ENCODE measurements at regions of chr12 and their contacts with region 1.

Region 1: GRCh38 chr12:120686690-120687577 is at the start of gene MLEC:
- DNase-seq: peak; percentile 100
- H3K4me3 Mint-ChIP-seq: peak within 1 kb of the TSS; percentile 88
- H3K27ac Mint-ChIP-seq: peak within 1 kb of the TSS; percentile 86
- H3K4me1 Mint-ChIP-seq: peaks cover 48% of the 10 kb centered on the region
- H3K27me3 Mint-ChIP-seq: no peaks in the 10 kb centered on the region
- total RNA-seq, gene MLEC: 139 and 150 TPM in 2 replicates

Region 2: DNA sequence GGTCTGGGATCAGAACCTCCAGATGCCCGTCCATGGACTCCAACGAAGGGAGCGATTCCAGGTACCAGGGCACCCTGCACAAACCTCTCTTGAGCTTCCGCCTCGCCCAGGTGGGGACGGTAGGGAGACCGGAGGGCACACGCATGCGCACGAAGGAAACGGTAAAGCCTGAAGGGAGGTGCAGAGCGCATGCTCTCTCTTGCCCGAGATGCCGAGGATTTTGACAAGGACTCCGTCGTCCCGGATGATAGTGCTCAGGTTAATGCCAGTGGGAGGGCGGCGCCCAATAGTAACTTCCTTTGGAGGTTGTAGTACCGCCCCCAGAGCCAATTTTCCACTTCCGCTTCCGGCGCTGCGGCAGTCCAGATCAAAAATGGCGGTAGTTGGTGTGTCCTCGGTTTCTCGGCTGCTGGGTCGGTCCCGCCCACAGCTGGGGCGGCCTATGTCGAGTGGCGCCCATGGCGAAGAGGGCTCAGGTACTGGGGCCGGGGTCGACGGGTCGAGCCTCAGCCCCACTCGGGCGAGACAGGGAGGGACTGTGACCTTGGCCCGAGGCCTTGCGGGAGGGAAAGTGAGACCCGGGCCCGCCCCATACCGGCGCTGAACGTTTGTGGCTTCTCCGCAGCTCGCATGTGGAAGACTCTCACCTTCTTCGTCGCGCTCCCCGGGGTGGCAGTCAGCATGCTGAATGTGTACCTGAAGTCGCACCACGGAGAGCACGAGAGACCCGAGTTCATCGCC is 249.0 kb before region 1 on chr12 and contains the start of gene COX6A1:
- intact Hi-C with region 1: loop called (anchors 2 kb)
- DNase-seq: peak; percentile 97
- H3K4me3 Mint-ChIP-seq: peak within 1 kb of the TSS; percentile 100
- H3K27ac Mint-ChIP-seq: peak within 1 kb of the TSS; percentile 98
- H3K4me1 Mint-ChIP-seq: peaks cover 31% of the 10 kb centered on the region
- H3K27me3 Mint-ChIP-seq: no peaks in the 10 kb centered on the region
- total RNA-seq, gene COX6A1: 352 and 365 TPM in 2 replicates

Region 3: DNA sequence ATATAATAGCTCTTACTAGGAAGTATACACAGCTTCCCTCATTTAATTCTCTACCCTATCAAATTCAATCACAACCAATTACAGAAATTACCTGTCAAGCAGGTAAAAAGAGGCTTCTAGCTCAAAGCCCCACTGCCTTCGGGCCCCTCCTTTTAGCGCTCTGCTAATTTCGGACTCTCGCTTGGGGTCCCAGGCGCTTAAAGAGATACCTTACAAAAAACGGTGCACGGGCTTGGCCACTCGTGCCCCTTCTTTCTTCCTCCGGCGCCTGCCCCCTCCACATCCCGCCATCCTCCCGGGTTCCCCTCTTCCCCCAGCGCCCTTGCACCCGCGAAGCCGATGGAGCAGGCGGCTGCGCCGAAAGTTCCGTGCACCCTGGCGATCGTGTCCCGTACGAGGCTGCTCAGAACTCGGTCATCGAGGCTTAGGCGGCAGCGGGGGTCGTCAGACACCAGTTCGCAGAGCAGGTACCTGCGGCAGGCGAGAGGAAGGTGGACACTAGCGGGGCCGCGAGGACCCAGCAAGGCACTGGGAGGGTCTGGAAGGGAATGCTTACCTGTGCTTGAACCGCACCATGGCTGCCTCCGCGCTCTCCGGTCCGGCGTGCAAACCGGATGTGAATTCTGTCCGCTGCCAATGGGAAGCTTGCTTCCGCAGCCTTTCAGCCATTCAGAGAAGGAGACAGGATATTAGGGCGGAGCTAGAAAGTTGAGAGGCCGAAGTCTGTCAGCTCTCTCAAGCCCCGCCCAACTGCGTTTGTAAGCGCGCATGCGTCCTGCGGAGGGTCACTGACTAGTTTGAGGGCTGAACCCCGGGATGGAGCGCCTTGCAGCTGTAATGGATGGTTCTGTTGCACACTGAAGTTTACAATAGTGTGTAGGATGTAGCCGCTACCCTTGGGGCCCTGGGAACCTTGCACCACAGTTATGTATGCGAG is 105.9 kb before region 1 on chr12 and contains the start of gene POP5:
- intact Hi-C with region 1: loop called (anchors 1 kb)
- DNase-seq: peak; percentile 95
- H3K4me3 Mint-ChIP-seq: peak within 1 kb of the TSS; percentile 98
- H3K27ac Mint-ChIP-seq: peak within 1 kb of the TSS; percentile 89
- H3K4me1 Mint-ChIP-seq: peaks cover 36% of the 10 kb centered on the region
- H3K27me3 Mint-ChIP-seq: peaks cover 18% of the 10 kb centered on the region
- total RNA-seq, gene POP5: 83.3 and 85.0 TPM in 2 replicates

Region 4: DNA sequence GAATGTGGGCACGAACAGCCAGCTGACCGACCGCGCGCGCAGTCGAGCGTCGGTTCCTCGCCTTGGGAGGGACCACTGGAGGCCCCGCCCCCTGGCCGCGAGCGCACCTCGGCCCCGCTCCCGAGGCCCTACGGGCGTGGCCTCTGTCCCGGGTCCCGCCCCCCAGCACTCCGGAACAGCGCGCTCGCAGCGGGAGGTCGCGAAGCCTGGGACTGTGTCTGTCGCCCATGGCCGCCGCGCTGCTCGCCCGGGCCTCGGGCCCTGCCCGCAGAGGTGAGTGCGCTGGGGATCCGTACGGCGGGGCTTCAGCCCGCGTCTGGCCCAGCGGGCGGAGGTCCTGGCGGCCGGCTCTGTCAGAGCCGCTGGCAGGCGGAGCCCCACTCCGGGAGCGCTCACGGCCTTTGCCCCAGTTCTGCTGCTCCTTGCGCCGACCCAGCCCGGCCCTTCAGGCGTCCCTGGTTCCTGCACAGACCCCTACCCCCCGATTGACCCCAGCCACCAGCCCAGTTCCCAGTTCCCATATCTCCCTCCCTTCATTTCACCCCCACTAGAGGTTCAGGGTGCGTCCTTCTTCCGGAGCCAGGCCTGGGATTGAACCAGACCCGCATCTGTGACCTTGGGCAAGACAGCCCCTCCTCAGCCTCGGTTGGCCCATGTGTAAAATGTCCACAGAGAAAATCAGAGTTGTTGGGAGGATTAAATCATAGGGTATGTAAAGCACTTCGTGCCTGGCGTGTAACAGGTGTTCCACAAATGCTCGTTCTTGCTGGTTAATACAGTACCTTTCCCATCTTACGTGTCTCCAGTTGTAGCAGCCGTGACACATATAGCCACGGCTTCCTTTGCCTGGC is 39.0 kb after region 1 on chr12 and contains the start of gene ACADS:
- intact Hi-C with region 1: loop called (anchors 1 kb)
- DNase-seq: peak; percentile 89
- H3K4me3 Mint-ChIP-seq: peak within 1 kb of the TSS; percentile 94
- H3K27ac Mint-ChIP-seq: peak within 1 kb of the TSS; percentile 87
- H3K4me1 Mint-ChIP-seq: peaks cover 22% of the 10 kb centered on the region
- H3K27me3 Mint-ChIP-seq: no peaks in the 10 kb centered on the region
- total RNA-seq, gene ACADS: 10.8 and 11.1 TPM in 2 replicates

Region 5: DNA sequence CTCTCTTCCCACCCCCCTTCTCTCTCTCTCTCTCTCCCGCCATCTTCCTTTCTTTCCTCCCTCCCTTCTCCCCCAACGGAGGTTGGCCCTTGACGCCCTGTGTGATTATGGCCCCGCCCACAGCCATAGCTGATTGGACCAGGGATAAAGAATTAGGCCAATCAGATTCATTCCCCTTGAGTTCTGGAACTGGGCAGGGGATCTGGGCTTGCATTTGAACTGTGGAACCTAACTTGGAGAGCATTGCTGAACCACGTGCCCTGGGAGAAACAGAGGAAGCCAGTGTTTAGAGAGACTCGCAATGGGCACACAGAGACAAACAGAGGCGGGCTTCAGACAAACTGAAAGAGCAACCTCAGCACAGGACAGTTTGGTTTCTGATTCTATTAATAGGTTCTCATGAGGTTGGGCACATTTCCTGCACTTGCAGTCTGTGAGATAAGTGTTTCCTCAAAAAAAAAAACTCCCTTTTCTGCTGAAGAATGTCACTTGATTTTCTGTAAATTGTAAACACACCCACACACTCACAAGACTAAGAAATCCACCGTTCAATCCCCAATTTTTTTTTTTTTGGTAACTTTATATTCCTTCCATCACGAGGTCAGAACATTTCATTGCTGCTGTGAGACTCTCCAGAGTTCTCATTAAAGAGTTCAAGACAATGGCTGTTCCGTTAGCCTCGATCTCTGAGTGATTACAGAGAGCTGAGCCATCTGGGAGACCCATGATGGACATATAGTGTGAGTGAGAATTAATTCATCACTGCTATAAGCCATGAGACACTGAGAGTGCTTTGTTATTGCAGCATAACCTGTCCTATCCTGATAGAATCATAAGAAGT is 442.3 kb after region 1 on chr12:
- intact Hi-C with region 1: loop called (anchors 1 kb)
- DNase-seq: peak; percentile 81
- H3K4me3 Mint-ChIP-seq: peak overlapping the region; percentile 68
- H3K27ac Mint-ChIP-seq: peak overlapping the region; percentile 99
- H3K4me1 Mint-ChIP-seq: peaks cover 80% of the 10 kb centered on the region
- H3K27me3 Mint-ChIP-seq: no peaks in the 10 kb centered on the region

Region 6: DNA sequence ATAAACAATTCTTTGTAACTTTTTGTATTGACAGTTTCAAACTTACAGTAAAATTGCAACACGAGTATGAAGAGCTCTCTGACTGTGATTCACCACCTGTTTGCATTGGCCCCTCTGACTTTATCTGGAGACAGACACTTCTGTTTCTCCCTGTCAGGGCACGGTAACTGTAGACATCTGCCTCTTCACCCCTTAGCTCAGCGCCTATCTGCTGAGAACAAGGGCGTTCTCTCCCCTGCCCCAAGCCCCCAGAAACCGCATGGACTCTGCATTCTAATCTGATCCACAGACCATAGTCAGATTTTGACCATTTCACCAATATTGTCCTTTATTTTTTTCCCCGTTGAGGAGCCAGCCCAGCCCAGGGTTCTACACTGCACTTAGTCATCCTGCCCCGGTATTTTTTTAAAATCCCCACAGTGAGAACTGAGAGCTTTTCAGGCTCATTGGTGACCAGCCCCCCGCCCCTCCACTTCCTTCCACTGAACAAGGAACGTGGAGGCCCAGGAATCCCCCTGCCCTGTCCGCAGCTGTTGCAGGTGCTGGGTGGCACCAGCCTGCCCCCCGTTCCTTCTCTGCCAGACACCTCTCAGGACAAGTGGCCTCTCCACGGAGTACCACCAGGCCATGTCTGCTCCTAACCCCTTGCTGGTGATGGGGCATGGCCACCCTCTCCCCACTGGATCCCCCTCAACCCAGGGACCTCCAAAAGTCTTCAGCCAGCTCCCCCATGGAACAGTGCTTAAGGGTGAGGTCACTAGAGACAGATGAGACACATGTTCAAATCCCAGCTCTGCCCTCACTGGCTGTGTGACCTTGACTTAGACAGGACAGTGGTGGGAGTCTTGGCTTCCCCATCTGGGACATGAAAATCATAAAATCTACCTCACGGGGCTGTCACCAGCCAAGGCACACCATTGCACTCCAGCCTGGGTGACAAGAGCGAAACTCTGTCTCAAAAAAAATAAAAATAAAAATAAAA is 1095.4 kb after region 1 on chr12:
- intact Hi-C with region 1: loop called (anchors 5 kb)
- DNase-seq: peak; percentile 42
- H3K4me3 Mint-ChIP-seq: peak overlapping the region; percentile 59
- H3K27ac Mint-ChIP-seq: peak overlapping the region; percentile 92
- H3K4me1 Mint-ChIP-seq: peaks cover 49% of the 10 kb centered on the region
- H3K27me3 Mint-ChIP-seq: no peaks in the 10 kb centered on the region